Head of caudate nucleus (tissue), 42 donors: ENCODE measurements at regions of chr15 and their contacts with region 1.

Region 1: GRCh38 chr15:57213862-57214261 is 162.4 kb upstream of the CGNL1 start:
- DNase-seq: peak in 3 of 42 donors; percentile 13 to 44 (median 20)

Region 2: DNA sequence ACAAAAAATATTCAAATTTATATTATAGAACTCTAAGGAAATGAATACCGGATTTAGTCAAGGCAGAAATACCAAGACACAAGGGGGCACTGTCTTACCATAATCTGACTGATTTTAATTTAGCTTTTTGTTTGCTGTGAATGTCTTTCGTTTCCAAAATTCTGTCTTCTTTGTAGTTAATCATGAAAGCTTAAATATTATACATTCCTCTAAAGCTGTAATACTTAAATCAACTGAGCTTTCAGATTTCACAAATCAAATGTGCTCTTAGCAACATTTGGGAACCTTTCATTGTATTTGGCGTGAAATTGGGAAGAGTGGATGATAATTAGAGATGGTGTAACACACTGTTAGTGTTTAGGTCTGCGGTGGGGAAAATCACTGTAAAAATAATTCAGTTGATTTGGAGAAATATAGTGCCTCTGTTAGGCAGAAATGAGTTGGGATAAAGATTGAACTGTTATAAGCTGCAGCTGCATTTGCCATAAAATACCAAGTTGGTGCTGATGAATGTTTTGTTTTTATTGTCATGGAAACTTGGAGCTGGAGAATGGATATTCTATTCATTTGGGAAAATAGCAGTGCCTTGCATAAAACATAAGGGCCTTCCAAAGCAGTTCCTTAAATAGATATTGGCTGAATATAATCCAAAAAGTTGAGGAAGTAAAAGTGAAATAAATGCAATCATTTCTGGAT is 67.2 kb before region 1 on chr15:
- intact Hi-C with region 1: loop called (anchors 2 kb)
- DNase-seq: peak in 10 of 42 donors; percentile 31 to 77 (median 48)

Region 3: GRCh38 chr15:57692709-57693108 is 478.8 kb after region 1 on chr15:
- intact Hi-C with region 1: no loop called
- DNase-seq: no peak